Activated CD8-positive, alpha-beta memory T cell treated with anti-CD3 and anti-CD28 coated beads, Interleukin-2, amount 10 ng/mL, durations not matched to agents 7 days and 5 days (primary cell): ENCODE measurements at regions of chr6 and their contacts with region 1.

Region 1: DNA sequence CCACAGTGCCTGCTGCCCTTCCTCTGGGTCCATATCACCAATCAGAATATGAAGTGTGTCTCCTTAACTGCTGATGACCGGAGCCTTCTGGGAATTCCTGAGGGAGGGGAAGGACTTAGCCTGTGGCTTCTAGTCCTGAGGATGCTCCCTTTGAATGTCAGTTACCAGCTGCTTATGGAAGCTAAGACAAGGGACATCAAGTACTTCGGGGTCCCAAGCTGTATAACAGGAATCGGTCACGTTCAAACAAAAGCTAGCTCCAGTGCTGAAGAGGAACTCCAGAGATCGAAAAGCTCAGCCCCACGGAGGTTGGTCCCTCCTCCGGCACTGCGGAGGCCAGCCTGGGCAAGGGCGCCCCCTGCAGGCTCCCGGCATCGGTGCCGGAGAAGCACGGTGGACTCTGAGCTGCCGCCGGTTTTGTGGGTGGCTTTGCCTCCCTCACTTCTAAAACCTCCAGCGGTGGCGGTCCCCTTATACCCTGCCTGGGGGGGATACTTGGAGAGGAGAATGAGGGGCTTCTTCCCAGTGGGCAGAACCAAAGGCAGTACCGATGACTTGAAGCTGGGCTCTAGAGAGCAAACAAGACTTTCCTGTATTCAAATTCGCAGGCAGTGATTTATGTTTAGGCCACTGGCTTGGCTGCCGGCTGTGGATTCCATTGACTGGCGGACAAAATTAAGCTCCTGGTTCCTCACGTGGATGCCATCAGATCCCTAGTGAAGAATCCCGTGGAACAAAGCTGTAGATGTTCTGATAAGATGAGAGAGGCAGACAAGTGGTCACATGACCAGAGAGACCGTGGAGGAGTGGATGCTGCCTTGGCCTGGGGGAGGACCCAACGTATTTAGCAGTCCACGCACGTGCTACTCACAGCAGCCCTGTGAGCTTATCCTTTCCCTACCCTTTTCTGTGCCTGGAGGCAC is 16.2 kb upstream of the UBR2 start:
- DNase-seq: peak; percentile 91
- ATAC-seq: peak; percentile 100
- H3K4me3 Mint-ChIP-seq: peak overlapping the region; percentile 59
- H3K27ac Mint-ChIP-seq: peak overlapping the region; percentile 40
- H3K4me1 Mint-ChIP-seq: peaks cover 22% of the 10 kb centered on the region
- H3K27me3 Mint-ChIP-seq: peaks cover 10% of the 10 kb centered on the region

Region 2: DNA sequence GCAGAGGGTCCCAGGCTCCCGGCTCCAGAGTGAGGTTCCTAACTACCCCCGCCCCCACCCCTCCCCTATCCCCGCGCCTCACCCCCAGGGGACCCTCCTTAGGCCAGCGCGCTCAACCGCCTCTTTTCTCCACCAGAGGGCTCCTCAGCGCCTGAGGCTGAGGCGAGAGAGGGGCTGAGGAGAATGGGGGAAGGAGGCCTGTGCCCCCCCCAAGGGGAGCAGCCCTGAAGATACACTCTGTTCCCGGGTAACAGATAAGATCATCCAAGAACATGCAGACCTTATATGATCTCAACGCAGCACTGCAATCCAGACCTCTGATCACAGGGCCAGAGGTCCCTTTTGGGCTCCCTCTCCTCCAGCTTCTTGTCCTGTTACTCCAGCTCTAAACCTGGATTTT is 286.7 kb before region 1 on chr6:
- CTCF ChIA-PET with region 1: interaction called, 66 read pairs
- DNase-seq: no peak
- ATAC-seq: peak; percentile 66
- H3K4me3 Mint-ChIP-seq: no peak overlapping the region
- H3K27ac Mint-ChIP-seq: peak overlapping the region; percentile 49
- H3K4me1 Mint-ChIP-seq: peaks cover 12% of the 10 kb centered on the region
- H3K27me3 Mint-ChIP-seq: no peaks in the 10 kb centered on the region

Region 3: DNA sequence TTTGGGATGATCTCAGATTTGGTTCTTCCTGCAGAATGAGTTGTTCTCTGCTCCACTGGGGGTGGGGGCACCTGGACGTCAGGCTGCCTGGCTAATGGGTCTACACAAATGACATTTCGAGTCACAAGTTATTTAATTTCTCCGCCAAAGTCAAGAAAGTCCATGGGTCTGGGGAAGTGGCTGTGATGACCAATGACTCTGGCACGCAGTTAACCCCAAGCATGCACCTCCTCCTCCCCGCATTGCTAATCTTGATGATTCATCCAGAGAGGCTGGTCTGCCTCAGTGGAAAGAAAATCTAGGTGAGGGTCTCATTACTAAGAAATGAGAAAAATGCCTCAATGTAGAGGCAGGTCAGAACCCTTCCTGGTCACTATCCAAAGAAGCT is 231.7 kb before region 1 on chr6:
- CTCF ChIA-PET with region 1: interaction called, 11 read pairs
- DNase-seq: no peak
- ATAC-seq: no peak
- H3K4me3 Mint-ChIP-seq: no peak overlapping the region
- H3K27ac Mint-ChIP-seq: peak overlapping the region; percentile 56
- H3K4me1 Mint-ChIP-seq: peaks cover 67% of the 10 kb centered on the region
- H3K27me3 Mint-ChIP-seq: no peaks in the 10 kb centered on the region

Region 4: GRCh38 chr6:42417641-42418112 is 130.0 kb before region 1 on chr6:
- CTCF ChIA-PET with region 1: interaction called, 16 read pairs
- DNase-seq: peak; percentile 92
- ATAC-seq: peak; percentile 93
- H3K4me3 Mint-ChIP-seq: peak overlapping the region; percentile 43
- H3K27ac Mint-ChIP-seq: peak overlapping the region; percentile 72
- H3K4me1 Mint-ChIP-seq: peaks cover 71% of the 10 kb centered on the region
- H3K27me3 Mint-ChIP-seq: peaks cover 6% of the 10 kb centered on the region

Region 5: GRCh38 chr6:42505377-42505702 is 42.3 kb before region 1 on chr6:
- CTCF ChIA-PET with region 1: interaction called, 26 read pairs
- DNase-seq: no peak
- ATAC-seq: peak; percentile 42
- H3K4me3 Mint-ChIP-seq: no peak overlapping the region
- H3K27ac Mint-ChIP-seq: no peak overlapping the region
- H3K4me1 Mint-ChIP-seq: peaks cover 21% of the 10 kb centered on the region
- H3K27me3 Mint-ChIP-seq: no peaks in the 10 kb centered on the region

Region 6: DNA sequence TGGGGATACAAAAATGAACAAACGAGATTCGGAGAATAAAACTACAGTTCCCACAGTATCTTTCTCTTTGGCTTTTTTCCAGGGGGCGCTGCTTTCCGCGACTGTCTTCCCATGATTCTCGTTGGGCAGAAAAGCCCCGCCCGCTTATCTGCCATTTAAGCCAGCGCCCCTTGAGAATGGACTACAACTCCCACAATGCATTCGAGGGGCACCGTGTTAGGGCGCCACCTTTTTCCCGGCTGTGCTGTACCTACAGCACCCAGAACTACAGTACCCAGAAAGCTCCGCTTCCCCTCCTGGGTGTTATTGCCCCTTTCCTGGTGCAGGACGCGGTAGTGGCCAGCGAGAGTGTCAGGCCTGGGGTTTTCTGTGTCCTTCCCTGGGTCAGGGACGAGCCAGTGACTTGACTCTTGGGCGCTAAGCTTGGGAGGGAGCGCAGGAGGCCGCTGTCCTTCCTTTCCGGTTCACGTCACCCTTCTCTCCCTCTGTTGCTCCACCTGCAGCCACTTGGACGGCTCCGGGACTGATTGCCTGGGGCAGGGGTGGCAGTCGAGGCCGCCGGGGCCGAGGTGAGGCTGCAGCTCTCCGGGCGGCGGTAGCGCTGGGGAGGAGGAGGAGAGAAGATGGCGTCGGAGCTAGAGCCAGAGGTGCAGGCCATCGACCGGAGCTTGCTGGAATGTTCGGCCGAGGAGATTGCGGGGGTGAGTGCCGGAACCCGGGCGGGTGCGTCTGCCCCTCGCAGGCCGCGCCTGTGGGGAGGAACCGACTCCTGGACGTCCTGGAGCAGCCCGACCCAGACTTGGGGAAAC is 16.2 kb after region 1 on chr6 and contains the start of gene UBR2:
- CTCF ChIA-PET with region 1: interaction called, 38 read pairs
- DNase-seq: peak; percentile 98
- ATAC-seq: peak; percentile 95
- H3K4me3 Mint-ChIP-seq: peak within 1 kb of the TSS; percentile 93
- H3K27ac Mint-ChIP-seq: peak within 1 kb of the TSS; percentile 88
- H3K4me1 Mint-ChIP-seq: peaks cover 27% of the 10 kb centered on the region
- H3K27me3 Mint-ChIP-seq: peaks cover 3% of the 10 kb centered on the region
- total RNA-seq, gene UBR2: 27.5 to 32.3 TPM

Region 7: GRCh38 chr6:42618686-42619085 is 71.0 kb after region 1 on chr6:
- CTCF ChIA-PET with region 1: no interaction called
- DNase-seq: no peak
- ATAC-seq: no peak
- H3K4me3 Mint-ChIP-seq: no peak overlapping the region
- H3K27ac Mint-ChIP-seq: no peak overlapping the region
- H3K4me1 Mint-ChIP-seq: peaks cover 12% of the 10 kb centered on the region
- H3K27me3 Mint-ChIP-seq: no peaks in the 10 kb centered on the region